Activated naive CD4-positive, alpha-beta T cell treated with anti-CD3 and anti-CD28 coated beads for 36 hours (primary cell): ENCODE measurements at regions of chr6 and their contacts with region 1.

Region 1: DNA sequence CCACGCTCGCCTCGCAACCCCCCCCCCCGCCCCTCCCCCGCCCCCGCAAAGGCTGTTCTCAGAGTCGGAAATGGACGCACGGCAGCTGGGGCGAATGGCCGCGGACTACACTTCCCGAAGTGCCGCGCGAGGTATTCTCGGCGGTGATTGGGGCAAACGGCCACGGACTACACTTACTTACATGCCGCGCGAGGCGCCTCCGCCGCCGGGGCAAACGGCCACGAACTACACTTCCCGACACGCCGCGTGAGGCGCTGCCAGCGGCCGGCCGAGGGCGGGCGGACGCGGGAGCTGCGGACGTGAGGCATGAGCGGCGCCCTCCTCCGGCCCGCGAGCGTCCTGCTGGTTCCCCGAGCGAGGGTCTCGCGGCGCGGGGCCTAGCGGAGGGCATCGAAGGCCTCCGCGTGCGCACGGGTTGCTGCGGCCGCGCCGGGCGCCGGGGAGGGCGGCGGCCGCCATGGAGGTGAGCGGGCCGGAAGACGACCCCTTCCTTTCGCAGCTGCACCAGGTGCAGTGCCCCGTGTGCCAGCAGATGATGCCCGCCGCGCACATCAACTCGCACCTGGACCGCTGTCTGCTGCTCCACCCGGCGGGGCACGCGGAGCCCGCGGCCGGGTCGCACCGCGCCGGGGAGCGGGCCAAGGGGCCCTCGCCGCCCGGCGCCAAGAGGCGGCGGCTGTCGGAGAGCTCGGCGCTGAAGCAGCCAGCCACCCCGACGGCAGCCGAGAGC is at the start of gene WRNIP1:
- DNase-seq: peak; percentile 97
- H3K4me3 Mint-ChIP-seq: peak within 1 kb of the TSS; percentile 93
- H3K27ac Mint-ChIP-seq: peak within 1 kb of the TSS; percentile 96
- H3K4me1 Mint-ChIP-seq: peaks cover 45% of the 10 kb centered on the region
- H3K27me3 Mint-ChIP-seq: no peaks in the 10 kb centered on the region
- total RNA-seq, gene WRNIP1: 19.2 to 21.7 TPM

Region 2: GRCh38 chr6:2245094-2245876 is 520.0 kb before region 1 on chr6 and contains the start of gene GMDS:
- CTCF ChIA-PET with region 1: no interaction called
- intact Hi-C with region 1: loop called (anchors 10 kb)
- DNase-seq: peak; percentile 79
- H3K4me3 Mint-ChIP-seq: peak within 1 kb of the TSS; percentile 88
- H3K27ac Mint-ChIP-seq: peak within 1 kb of the TSS; percentile 94
- H3K4me1 Mint-ChIP-seq: peaks cover 62% of the 10 kb centered on the region
- H3K27me3 Mint-ChIP-seq: no peaks in the 10 kb centered on the region
- total RNA-seq, gene GMDS: 38.4 to 41.3 TPM

Region 3: GRCh38 chr6:2738373-2738979 is 26.9 kb before region 1 on chr6:
- CTCF ChIA-PET with region 1: interaction called, 11 read pairs
- intact Hi-C with region 1: loop called (anchors 1 kb)
- DNase-seq: peak; percentile 77
- H3K4me3 Mint-ChIP-seq: no peak overlapping the region
- H3K27ac Mint-ChIP-seq: no peak overlapping the region
- H3K4me1 Mint-ChIP-seq: peaks cover 5% of the 10 kb centered on the region
- H3K27me3 Mint-ChIP-seq: no peaks in the 10 kb centered on the region

Region 4: DNA sequence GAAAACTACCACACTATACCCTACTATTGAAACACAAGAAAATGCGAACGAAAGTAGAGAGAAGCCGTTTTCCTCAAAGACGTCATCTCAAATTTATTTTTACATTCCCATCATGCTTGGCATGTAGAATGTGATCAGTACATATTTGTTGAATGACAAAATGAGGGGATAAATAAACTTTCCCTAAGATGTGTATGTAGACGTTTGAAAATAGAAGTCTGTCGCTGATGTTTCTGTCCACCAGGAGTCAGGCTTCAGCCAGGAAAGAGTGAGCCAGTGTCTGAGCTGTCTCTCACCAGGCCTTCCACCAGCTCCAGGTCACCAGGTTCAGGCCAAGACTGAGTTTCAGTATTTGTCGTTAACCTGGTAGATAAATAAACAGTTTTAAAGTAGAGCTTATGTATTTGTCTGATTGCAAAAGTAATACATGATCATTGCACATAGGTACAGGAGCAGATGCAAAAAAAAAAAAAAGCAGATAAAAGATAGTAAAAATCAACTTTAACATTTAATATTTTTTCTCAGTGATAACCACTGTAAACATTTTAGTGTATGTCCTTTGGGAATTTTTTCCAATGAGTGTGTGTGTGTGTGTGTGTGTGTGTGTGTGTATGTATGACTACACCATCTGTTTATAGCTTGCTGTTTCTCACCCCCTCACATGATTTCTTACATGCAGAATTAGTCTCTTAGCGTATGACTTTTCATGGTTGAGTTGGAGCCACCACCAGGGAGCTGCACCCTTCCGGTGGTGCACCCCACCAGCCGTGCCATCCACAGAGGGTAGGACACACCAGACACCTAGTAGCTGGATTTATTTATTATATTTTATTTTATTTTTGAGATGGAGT is 26.0 kb after region 1 on chr6:
- CTCF ChIA-PET with region 1: interaction called, 3 read pairs
- intact Hi-C with region 1: loop called (anchors 2 kb)
- DNase-seq: peak; percentile 87
- H3K4me3 Mint-ChIP-seq: no peak overlapping the region
- H3K27ac Mint-ChIP-seq: no peak overlapping the region
- H3K4me1 Mint-ChIP-seq: peaks cover 39% of the 10 kb centered on the region
- H3K27me3 Mint-ChIP-seq: no peaks in the 10 kb centered on the region

Region 5: DNA sequence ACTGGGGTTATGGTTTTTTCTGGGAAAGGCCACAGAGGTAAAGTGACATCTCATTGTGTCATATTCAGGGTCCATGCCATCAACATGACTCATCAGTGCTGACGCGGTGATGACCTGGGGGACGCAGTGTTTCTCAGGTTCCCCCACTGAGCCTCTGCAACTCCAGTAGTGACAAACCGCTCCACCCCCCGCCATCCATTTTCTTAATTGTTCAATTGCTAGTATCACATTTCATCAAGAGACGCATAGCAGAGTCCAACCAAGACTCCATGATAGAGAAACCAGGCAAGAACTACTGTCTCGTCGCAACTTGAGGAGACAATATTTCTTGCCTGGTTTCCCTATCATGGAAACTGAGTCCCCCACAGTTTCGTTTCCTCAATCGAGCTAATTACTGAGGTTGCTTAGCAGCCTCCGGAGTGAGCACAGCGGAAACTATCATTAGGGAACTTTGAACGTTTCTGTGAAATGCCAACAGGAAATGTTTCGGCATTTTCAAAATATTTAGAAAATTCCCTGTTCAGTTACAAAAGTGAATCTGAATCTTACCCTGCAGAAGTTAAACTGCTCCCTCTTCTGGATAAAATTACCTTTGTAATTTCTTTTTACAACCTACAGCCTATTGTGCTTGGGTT is 88.5 kb after region 1 on chr6:
- CTCF ChIA-PET with region 1: no interaction called
- intact Hi-C with region 1: loop called (anchors 1 kb)
- DNase-seq: peak; percentile 96
- H3K4me3 Mint-ChIP-seq: peak overlapping the region; percentile 59
- H3K27ac Mint-ChIP-seq: peak overlapping the region; percentile 100
- H3K4me1 Mint-ChIP-seq: peaks cover 64% of the 10 kb centered on the region
- H3K27me3 Mint-ChIP-seq: no peaks in the 10 kb centered on the region

Region 6: GRCh38 chr6:3068329-3069214 is 303.2 kb after region 1 on chr6 and contains the start of gene RIPK1:
- CTCF ChIA-PET with region 1: interaction called, 3 read pairs
- intact Hi-C with region 1: loop called (anchors 1 kb)
- DNase-seq: peak; percentile 95
- H3K4me3 Mint-ChIP-seq: peak within 1 kb of the TSS; percentile 92
- H3K27ac Mint-ChIP-seq: peak within 1 kb of the TSS; percentile 97
- H3K4me1 Mint-ChIP-seq: peaks cover 49% of the 10 kb centered on the region
- H3K27me3 Mint-ChIP-seq: no peaks in the 10 kb centered on the region
- total RNA-seq, gene RIPK1: 8.8 to 10.1 TPM

Region 7: DNA sequence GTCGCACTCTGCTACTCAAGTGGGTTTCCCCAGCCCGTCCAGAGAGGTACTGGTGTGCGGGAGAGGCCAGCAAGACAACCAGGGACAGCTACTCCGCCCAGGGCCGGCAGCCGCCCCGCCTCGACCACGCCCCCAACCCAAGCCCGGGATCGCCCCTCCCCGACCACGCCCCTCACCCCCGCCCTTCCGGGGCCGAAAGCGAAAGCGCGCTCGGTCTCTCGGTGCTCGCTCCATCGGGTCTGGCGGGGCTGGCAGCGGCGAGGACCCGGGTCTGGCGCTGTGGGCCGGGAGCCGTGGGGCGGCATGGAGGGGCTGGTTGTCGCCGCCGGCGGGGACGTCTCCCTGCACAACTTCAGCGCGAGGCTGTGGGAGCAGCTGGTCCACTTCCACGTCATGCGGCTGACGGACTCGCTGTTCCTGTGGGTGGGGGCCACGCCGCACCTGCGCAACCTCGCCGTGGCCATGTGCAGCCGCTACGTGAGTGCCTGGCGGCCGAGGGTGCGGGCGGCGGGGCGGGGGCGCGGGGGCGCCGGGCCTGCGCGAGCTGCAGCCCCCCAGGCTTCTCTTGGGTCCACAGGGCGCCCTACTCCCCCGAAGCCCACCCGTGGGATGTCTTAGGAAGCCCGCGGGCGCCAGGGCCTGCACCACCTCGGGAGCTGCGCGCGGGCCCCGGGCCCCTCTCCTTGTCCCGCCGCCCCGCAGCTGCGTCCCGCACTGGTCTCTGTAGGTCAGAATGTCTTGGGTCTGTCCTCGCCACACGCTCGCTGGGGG is 493.6 kb after region 1 on chr6 and contains the start of gene PSMG4:
- CTCF ChIA-PET with region 1: no interaction called
- intact Hi-C with region 1: loop called (anchors 1 kb)
- DNase-seq: peak; percentile 94
- H3K4me3 Mint-ChIP-seq: peak within 1 kb of the TSS; percentile 94
- H3K27ac Mint-ChIP-seq: peak within 1 kb of the TSS; percentile 87
- H3K4me1 Mint-ChIP-seq: peaks cover 35% of the 10 kb centered on the region
- H3K27me3 Mint-ChIP-seq: no peaks in the 10 kb centered on the region
- total RNA-seq, gene PSMG4: 23.9 to 26.2 TPM